Activated naive CD8-positive, alpha-beta T cell treated with anti-CD3 and anti-CD28 coated beads, Interleukin-2, amount 10 ng/mL, durations not matched to agents 7 days and 5 days (primary cell): ENCODE measurements at regions of chr20 and their contacts with region 1.

Region 1: DNA sequence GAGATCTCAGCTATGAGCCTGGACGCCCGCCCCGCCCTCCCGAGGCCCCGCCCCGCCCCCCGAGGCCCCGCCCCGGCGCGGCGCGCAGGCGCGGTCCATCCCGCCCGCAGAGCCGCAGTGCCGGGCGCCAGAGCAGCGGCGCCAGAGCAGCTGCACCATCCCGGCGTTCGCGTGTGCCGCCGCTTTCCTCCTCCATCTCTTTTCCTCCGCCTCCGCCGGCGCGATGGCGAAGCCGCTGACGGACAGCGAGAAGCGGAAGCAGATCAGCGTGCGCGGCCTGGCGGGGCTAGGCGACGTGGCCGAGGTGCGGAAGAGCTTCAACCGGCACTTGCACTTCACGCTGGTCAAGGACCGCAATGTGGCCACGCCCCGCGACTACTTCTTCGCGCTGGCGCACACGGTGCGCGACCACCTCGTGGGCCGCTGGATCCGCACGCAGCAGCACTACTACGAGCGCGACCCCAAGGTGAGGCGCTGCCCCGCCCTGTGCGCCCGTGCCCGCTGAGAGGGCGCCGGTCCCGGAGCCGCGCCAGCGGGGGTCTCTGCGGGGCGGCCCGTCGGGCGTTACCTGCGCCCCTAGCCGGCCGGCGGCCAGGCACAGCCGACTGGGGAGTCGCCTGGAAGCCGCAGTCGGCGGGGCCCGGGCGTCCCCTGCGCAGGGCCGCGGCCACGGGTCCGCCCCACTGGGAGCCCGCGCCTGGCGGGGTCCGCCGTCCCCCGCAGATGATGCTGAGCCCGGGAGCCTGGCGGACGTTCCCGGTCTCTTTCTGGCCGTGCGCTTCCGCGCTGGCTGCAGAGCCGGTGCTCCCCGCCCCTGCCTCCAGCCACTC is at the start of gene PYGB:
- DNase-seq: peak; percentile 87
- ATAC-seq: peak; percentile 87
- H3K4me3 Mint-ChIP-seq: peak within 1 kb of the TSS; percentile 88
- H3K27ac Mint-ChIP-seq: peak within 1 kb of the TSS; percentile 83
- H3K4me1 Mint-ChIP-seq: peaks cover 41% of the 10 kb centered on the region
- H3K27me3 Mint-ChIP-seq: peaks cover 12% of the 10 kb centered on the region
- total RNA-seq, gene PYGB: 29.3 to 29.5 TPM

Region 2: GRCh38 chr20:25195014-25195961 is 52.9 kb before region 1 on chr20 and contains the start of gene ENTPD6:
- POLR2A ChIA-PET with region 1: interaction called, 11 read pairs
- DNase-seq: peak; percentile 96
- ATAC-seq: peak; percentile 87
- H3K4me3 Mint-ChIP-seq: peak within 1 kb of the TSS; percentile 93
- H3K27ac Mint-ChIP-seq: peak within 1 kb of the TSS; percentile 82
- H3K4me1 Mint-ChIP-seq: peaks cover 21% of the 10 kb centered on the region
- H3K27me3 Mint-ChIP-seq: peaks cover under 1% of the 10 kb centered on the region
- total RNA-seq, gene ENTPD6: 54.6 to 62.3 TPM

Region 3: GRCh38 chr20:25407311-25408169 is 159.4 kb after region 1 on chr20 and contains the start of gene GINS1:
- POLR2A ChIA-PET with region 1: interaction called, 13 read pairs
- DNase-seq: peak; percentile 87
- ATAC-seq: peak; percentile 94
- H3K4me3 Mint-ChIP-seq: peak within 1 kb of the TSS; percentile 84
- H3K27ac Mint-ChIP-seq: peak within 1 kb of the TSS; percentile 77
- H3K4me1 Mint-ChIP-seq: peaks cover 16% of the 10 kb centered on the region
- H3K27me3 Mint-ChIP-seq: no peaks in the 10 kb centered on the region
- total RNA-seq, gene GINS1: 23.7 to 25.6 TPM